CD8-positive, alpha-beta memory T cell (primary cell): ENCODE measurements at regions of chr15 and their contacts with region 1.

Region 1: GRCh38 chr15:52730173-52730572 is 51.0 kb upstream of the ATOSA start:
- DNase-seq: peak in 4 of 5 donors; percentile 5 to 66 (median 58)
- H3K4me3 ChIP-seq: no peak overlapping the region
- H3K4me3 Mint-ChIP-seq: peak overlapping the region in 4 of 7 donors; percentile 19 to 54 (median 24)
- H3K27ac ChIP-seq: no peak overlapping the region
- H3K27ac Mint-ChIP-seq: peak overlapping the region in 7 of 8 donors; percentile 59 to 89 (median 81)
- H3K4me1 ChIP-seq: peaks cover 13% of the 10 kb centered on the region
- H3K4me1 Mint-ChIP-seq: peaks cover 12 to 18% (median 13%) of the 10 kb centered on the region in 3 donors
- H3K27me3 ChIP-seq: no peaks in the 10 kb centered on the region
- H3K27me3 Mint-ChIP-seq: no peaks in the 10 kb centered on the region

Region 2: GRCh38 chr15:52679232-52680040 is 50.7 kb before region 1 on chr15 and contains the start of gene ATOSA:
- CTCF ChIA-PET with region 1: interaction called, 18 read pairs
- POLR2A ChIA-PET with region 1: interaction called, 6 read pairs
- DNase-seq: peak; percentile 88 to 95 (median 92)
- H3K4me3 ChIP-seq: peak within 1 kb of the TSS; percentile 87
- H3K4me3 Mint-ChIP-seq: peak within 1 kb of the TSS; percentile 92 to 100 (median 100)
- H3K27ac ChIP-seq: peak within 1 kb of the TSS; percentile 90
- H3K27ac Mint-ChIP-seq: peak within 1 kb of the TSS; percentile 98 to 100 (median 100)
- H3K4me1 ChIP-seq: peaks cover 41% of the 10 kb centered on the region
- H3K4me1 Mint-ChIP-seq: peaks cover 49 to 84% (median 72%) of the 10 kb centered on the region in 3 donors
- H3K27me3 ChIP-seq: no peaks in the 10 kb centered on the region
- H3K27me3 Mint-ChIP-seq: peaks cover 0 to 6% of the 10 kb centered on the region in 2 donors
- total RNA-seq, gene ATOSA: 17.1 to 17.2 TPM